ENCODE measurements at regions of chr4 and their contacts with region 1.

Region 1: DNA sequence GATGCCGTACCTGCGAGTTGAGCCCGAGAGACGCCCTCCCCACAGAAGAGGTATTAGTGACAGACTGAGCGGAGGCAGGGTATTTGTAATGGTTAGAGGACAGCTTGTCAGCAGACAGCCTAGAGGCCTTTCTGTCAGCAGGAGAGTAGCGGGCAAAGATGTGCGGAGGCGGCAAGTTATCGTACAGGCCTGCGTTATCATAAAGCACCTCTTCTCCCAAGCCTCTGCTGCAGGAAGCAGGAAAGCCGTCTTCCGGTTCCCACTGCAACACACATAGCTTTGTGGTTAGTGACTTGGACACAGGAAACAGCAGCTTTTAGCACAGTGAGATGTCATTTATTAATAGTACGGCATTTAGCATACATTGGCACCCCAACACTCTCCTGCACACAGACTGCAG is 158.3 kb downstream of the AFAP1 start:
- DNase-seq: peak; percentile 57
- H3K4me3 Mint-ChIP-seq: peak overlapping the region; percentile 15
- H3K27ac Mint-ChIP-seq: peak overlapping the region; percentile 93
- H3K4me1 Mint-ChIP-seq: peaks cover 88% of the 10 kb centered on the region
- H3K27me3 Mint-ChIP-seq: no peaks in the 10 kb centered on the region

Region 2: DNA sequence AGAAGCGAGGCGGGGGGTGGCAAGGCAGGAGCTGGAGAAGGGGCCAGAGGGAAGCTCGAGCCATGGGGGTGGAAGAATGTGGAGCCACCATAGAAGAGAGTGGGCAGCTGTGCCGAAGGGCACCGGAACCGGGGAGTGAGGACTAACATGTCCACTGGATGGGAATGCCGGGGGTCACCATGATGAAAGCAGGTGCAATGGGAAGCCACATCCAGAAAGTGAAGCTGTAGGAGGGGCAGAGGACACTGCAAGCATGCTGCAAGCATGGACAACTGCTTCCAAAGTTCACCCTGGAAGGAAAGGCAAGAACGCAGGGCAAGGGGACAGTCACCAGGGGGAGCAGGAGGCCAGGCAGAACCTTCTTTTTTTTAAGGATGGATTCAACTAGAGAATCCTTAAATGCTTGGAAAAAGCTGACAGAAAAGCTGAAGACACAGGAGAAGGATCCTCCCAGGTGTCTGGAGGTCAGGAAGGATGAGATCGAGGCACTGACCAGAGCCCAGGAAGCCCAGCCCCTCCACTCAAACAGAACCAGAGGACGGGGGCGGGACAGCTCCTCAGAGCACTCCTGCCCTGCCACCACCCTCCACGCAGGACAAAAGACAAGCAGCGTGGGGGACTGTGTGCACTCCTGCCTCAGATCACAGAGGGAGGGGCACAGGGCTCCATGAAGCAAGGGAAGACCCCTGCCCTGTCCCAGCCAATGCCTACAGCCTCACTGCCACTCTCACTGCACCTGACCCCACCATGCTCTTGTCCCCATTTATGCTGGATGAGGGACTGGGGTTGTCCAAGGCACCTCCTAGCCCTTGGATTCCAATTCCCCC is 10.9 kb before region 1 on chr4:
- CTCF ChIA-PET with region 1: interaction called, 4 read pairs
- POLR2A ChIA-PET with region 1: no interaction called
- intact Hi-C with region 1: loop called (anchors 1 kb)
- DNase-seq: peak; percentile 48
- H3K4me3 Mint-ChIP-seq: no peak overlapping the region
- H3K27ac Mint-ChIP-seq: peak overlapping the region; percentile 78
- H3K4me1 Mint-ChIP-seq: peaks cover 27% of the 10 kb centered on the region
- H3K27me3 Mint-ChIP-seq: no peaks in the 10 kb centered on the region